AG04449 (cell line): ENCODE measurements at regions of chr1 and their contacts with region 1.

Region 1: GRCh38 chr1:157496121-157496526 is 56.2 kb downstream of the FCRL5 start:
- DNase-seq: no peak
- H3K4me3 ChIP-seq: no peak overlapping the region
- CTCF ChIP-seq: peak; percentile 69

Region 2: GRCh38 chr1:157170677-157171515 is 325.2 kb before region 1 on chr1:
- CTCF ChIA-PET with region 1: interaction called, 13 read pairs
- POLR2A ChIA-PET with region 1: no interaction called
- DNase-seq: no peak
- H3K4me3 ChIP-seq: no peak overlapping the region
- CTCF ChIP-seq: peak; percentile 55

Region 3: GRCh38 chr1:157512036-157512969 is 16.2 kb after region 1 on chr1:
- CTCF ChIA-PET with region 1: interaction called, 27 read pairs
- POLR2A ChIA-PET with region 1: no interaction called
- DNase-seq: no peak
- H3K4me3 ChIP-seq: no peak overlapping the region
- CTCF ChIP-seq: no peak

Region 4: DNA sequence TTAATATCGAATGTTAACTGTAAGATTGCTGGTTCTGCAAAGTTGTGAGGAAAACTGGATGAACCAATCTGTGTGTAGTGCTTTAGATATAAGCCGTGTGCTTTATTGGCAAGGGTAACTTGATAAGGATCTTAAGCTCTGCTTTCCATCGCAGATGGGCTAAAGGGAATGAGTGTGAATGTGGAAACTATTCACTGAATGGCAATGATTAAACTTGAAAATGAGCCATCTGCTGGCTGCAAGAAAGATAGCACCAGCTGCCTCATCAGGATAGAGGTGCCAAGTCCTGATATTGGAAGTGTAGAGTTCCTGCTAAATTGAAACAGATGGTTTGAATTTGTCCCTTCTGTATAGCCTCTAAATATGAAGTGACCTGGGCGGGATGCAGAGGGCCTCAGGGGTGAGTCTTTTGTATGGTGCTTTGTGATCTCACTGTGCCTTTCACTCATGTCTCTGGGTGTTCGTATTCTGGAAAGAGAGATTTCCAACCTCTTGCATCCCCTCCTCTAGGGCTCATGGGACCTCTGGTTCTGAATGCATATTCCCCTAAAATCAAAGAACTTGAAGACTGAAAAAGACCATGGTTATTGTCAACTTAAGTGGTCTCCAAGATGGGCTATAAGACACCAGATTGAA is 195.3 kb after region 1 on chr1:
- CTCF ChIA-PET with region 1: no interaction called
- POLR2A ChIA-PET with region 1: no interaction called
- DNase-seq: peak; percentile 4
- H3K4me3 ChIP-seq: no peak overlapping the region
- CTCF ChIP-seq: peak; percentile 45